Activated CD4-positive, alpha-beta memory T cell treated with anti-CD3 and anti-CD28 coated beads for 36 hours (primary cell): ENCODE measurements at regions of chr2 and their contacts with region 1.

Region 1: DNA sequence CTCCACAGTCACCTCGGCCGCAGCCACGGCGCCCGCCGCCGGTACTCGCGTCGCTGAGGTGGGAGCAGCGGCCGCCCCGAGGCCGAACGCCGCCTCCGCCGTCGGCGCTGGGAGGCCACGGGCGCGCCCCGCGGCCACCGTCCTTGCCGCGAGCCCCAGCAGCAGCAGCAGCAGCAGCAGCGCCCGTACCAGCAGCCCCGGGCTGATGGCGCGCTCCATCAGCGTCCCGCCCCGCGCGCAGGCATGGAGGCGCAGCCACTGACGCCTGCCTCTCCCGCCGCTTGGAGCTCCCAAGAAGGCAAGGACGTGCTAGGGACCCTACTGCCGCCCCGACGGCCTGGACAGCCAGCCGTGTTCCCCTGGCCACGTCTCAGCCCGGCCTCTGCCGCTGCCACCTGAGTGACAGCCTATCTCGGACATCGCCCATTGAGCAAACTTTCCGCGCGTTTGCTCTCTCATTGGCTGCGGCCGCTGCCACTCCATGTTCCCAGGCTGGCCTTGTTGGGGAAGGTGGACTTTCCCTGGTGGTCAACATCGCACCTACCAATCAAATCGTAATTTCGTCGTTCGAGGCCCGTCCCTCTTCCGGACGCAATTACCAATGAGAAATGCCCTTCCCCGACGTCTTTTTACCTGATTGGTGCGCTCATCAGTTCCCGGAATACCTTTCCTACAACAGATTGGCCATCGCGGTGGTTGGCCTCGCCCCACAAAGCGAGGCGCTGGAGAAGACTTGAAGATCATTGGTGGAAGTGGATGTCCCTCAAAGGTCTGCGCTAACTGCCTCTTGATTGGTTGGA is at the start of gene EIF2AK3:
- DNase-seq: peak; percentile 96
- H3K4me3 Mint-ChIP-seq: no peak within 1 kb of the TSS
- H3K27ac Mint-ChIP-seq: peak within 1 kb of the TSS; percentile 88
- H3K4me1 Mint-ChIP-seq: peaks cover 21% of the 10 kb centered on the region
- H3K27me3 Mint-ChIP-seq: no peaks in the 10 kb centered on the region
- total RNA-seq, gene EIF2AK3: 14.2 to 15.5 TPM

Region 2: DNA sequence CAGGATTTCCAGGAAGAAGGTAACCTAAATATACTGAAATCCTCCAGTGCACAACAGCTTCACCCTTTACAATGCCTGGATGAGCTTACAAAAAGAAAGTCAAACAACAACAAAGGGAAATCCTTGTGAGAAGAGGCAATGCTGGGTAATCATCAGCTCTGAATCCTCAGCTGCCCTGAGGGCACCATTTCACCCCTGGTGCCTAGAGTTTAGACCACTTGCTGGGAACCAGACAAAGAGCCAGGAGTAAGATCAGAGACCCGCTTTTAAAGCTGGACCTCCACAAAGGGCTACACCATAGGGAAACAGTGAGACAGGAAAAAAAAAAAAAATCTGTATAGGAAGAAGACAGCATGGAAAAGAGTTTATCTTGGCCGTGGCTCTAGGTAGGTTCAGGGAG is 271.8 kb before region 1 on chr2:
- CTCF ChIA-PET with region 1: no interaction called
- POLR2A ChIA-PET with region 1: no interaction called
- intact Hi-C with region 1: no loop called
- DNase-seq: no peak
- H3K4me3 Mint-ChIP-seq: no peak overlapping the region
- H3K27ac Mint-ChIP-seq: no peak overlapping the region
- H3K4me1 Mint-ChIP-seq: peaks cover 2% of the 10 kb centered on the region
- H3K27me3 Mint-ChIP-seq: peaks cover 7% of the 10 kb centered on the region

Region 3: GRCh38 chr2:88590998-88591613 is 36.1 kb before region 1 on chr2:
- CTCF ChIA-PET with region 1: no interaction called
- POLR2A ChIA-PET with region 1: interaction called, 4 read pairs
- intact Hi-C with region 1: loop called (anchors 5 kb)
- DNase-seq: peak; percentile 37
- H3K4me3 Mint-ChIP-seq: no peak overlapping the region
- H3K27ac Mint-ChIP-seq: no peak overlapping the region
- H3K4me1 Mint-ChIP-seq: peaks cover 4% of the 10 kb centered on the region
- H3K27me3 Mint-ChIP-seq: no peaks in the 10 kb centered on the region

Region 4: GRCh38 chr2:88600038-88600465 is 27.2 kb before region 1 on chr2:
- CTCF ChIA-PET with region 1: no interaction called
- POLR2A ChIA-PET with region 1: interaction called, 25 read pairs
- intact Hi-C with region 1: loop called (anchors 1 kb)
- DNase-seq: peak; percentile 60
- H3K4me3 Mint-ChIP-seq: no peak overlapping the region
- H3K27ac Mint-ChIP-seq: peak overlapping the region; percentile 29
- H3K4me1 Mint-ChIP-seq: peaks cover 34% of the 10 kb centered on the region
- H3K27me3 Mint-ChIP-seq: no peaks in the 10 kb centered on the region

Region 5: GRCh38 chr2:88638743-88639142 is 11.5 kb after region 1 on chr2:
- CTCF ChIA-PET with region 1: no interaction called
- POLR2A ChIA-PET with region 1: interaction called, 7 read pairs
- intact Hi-C with region 1: loop called (anchors 1 kb)
- DNase-seq: peak; percentile 42
- H3K4me3 Mint-ChIP-seq: no peak overlapping the region
- H3K27ac Mint-ChIP-seq: no peak overlapping the region
- H3K4me1 Mint-ChIP-seq: peaks cover 19% of the 10 kb centered on the region
- H3K27me3 Mint-ChIP-seq: no peaks in the 10 kb centered on the region

Region 6: DNA sequence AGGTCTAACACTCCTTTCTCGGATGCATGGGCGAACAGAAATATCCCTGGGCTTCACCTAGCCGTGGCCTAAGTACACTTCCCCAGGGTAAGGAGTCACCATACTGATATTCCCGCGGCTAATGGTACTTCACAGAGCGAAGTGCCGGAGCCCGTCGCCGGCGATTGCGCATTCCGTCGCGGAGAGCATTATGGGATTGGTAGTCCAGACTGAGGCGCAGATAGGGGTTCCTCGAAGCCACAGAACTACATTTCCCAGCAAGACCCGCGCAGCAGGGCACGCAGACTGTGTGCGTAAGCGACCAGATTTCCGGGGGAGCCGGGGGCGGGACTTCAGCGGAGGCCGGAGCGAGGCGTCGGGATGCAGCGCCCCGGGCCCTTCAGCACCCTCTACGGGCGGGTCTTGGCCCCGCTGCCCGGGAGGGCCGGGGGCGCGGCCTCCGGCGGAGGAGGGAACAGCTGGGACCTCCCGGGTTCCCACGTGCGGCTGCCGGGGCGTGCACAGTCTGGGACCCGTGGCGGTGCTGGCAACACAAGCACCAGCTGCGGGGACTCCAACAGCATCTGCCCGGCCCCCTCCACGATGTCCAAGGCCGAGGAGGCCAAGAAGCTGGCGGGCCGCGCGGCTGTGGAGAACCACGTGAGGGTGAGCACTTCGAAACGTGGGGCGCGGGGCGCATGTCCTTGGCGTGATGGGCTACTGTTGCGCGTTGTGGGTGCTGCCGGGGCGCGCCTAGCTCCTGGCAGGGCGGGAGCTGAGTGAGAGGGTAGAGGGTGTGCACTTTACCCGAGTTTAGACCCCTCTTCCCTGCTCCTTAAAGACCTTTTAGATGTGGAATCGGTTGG is 64.3 kb after region 1 on chr2 and contains the start of gene RPIA:
- CTCF ChIA-PET with region 1: interaction called, 8 read pairs
- POLR2A ChIA-PET with region 1: interaction called, 11 read pairs
- intact Hi-C with region 1: loop called (anchors 1 kb)
- DNase-seq: peak; percentile 99
- H3K4me3 Mint-ChIP-seq: peak within 1 kb of the TSS; percentile 91
- H3K27ac Mint-ChIP-seq: peak within 1 kb of the TSS; percentile 89
- H3K4me1 Mint-ChIP-seq: peaks cover 34% of the 10 kb centered on the region
- H3K27me3 Mint-ChIP-seq: no peaks in the 10 kb centered on the region
- total RNA-seq, gene RPIA: 50.7 to 52.7 TPM

Region 7: GRCh38 chr2:88709181-88709641 is 82.0 kb after region 1 on chr2:
- CTCF ChIA-PET with region 1: no interaction called
- POLR2A ChIA-PET with region 1: no interaction called
- intact Hi-C with region 1: no loop called
- DNase-seq: no peak
- H3K4me3 Mint-ChIP-seq: no peak overlapping the region
- H3K27ac Mint-ChIP-seq: no peak overlapping the region
- H3K4me1 Mint-ChIP-seq: no peaks in the 10 kb centered on the region
- H3K27me3 Mint-ChIP-seq: no peaks in the 10 kb centered on the region

Region 8: DNA sequence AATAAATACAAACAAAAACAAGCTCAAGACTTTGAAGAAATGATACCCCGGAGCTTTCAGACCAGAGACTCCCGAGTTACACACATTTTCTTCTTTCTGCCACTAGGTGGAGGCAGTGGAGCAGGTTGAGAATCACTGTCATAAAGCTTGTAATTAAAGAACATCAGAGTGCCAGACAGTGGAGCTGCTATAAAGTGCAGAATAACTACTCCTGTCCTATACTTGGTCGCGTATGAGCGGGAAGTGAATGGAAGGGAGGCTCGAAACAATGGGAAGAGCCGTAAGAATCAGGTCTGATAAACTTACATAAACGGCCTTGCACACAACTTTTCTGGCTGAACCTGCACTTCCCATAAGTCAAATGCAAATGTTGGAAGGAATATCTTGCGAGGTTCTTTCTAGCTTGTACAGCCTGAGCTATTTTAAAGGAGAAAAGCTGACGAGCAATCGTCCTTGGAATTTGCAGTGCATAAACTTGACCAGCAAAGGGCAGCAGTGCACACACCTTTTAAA is 253.2 kb after region 1 on chr2:
- CTCF ChIA-PET with region 1: no interaction called
- POLR2A ChIA-PET with region 1: no interaction called
- intact Hi-C with region 1: no loop called
- DNase-seq: peak; percentile 34
- H3K4me3 Mint-ChIP-seq: no peak overlapping the region
- H3K27ac Mint-ChIP-seq: no peak overlapping the region
- H3K4me1 Mint-ChIP-seq: no peaks in the 10 kb centered on the region
- H3K27me3 Mint-ChIP-seq: peaks cover 14% of the 10 kb centered on the region